ENCODE measurements at regions of chr1 and their contacts with region 1.

Region 1: GRCh38 chr1:116724765-116725375 is 29.4 kb upstream of the CD2 start:
- DNase-seq: no peak
- ATAC-seq: peak; percentile 54
- H3K4me3 Mint-ChIP-seq: no peak overlapping the region
- H3K27ac Mint-ChIP-seq: no peak overlapping the region
- H3K4me1 Mint-ChIP-seq: peaks cover 6% of the 10 kb centered on the region
- H3K27me3 Mint-ChIP-seq: no peaks in the 10 kb centered on the region
- CTCF ChIP-seq: peak; percentile 60

Region 2: GRCh38 chr1:116489231-116489697 is 235.6 kb before region 1 on chr1:
- CTCF ChIA-PET with region 1: no interaction called
- POLR2A ChIA-PET with region 1: no interaction called
- intact Hi-C with region 1: no loop called
- DNase-seq: no peak
- ATAC-seq: no peak
- H3K4me3 Mint-ChIP-seq: no peak overlapping the region
- H3K27ac Mint-ChIP-seq: no peak overlapping the region
- H3K4me1 Mint-ChIP-seq: peaks cover 12% of the 10 kb centered on the region
- H3K27me3 Mint-ChIP-seq: no peaks in the 10 kb centered on the region
- CTCF ChIP-seq: no peak

Region 3: DNA sequence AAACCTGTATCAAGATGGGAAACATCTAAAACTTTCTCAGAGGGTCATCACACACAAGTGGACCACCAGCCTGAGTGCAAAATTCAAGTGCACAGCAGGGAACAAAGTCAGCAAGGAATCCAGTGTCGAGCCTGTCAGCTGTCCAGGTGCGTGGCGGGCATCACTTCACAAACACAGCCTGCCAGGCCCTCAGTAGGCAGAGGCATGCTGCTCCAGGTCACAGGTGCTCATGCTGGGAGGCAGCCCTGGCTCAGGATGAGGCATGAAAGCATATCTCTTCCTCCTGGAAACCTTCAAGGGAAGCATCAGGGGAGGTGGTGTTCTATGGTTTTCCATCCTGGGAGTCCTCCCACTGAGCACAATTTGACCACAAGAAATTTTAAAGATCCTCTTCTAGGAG is 35.6 kb after region 1 on chr1:
- CTCF ChIA-PET with region 1: no interaction called
- POLR2A ChIA-PET with region 1: no interaction called
- intact Hi-C with region 1: no loop called
- DNase-seq: no peak
- ATAC-seq: no peak
- H3K4me3 Mint-ChIP-seq: no peak overlapping the region
- H3K27ac Mint-ChIP-seq: no peak overlapping the region
- H3K4me1 Mint-ChIP-seq: no peaks in the 10 kb centered on the region
- H3K27me3 Mint-ChIP-seq: no peaks in the 10 kb centered on the region
- CTCF ChIP-seq: no peak

Region 4: GRCh38 chr1:116781034-116781433 is 56.2 kb after region 1 on chr1:
- CTCF ChIA-PET with region 1: no interaction called
- POLR2A ChIA-PET with region 1: no interaction called
- intact Hi-C with region 1: no loop called
- DNase-seq: no peak
- ATAC-seq: no peak
- H3K4me3 Mint-ChIP-seq: no peak overlapping the region
- H3K27ac Mint-ChIP-seq: no peak overlapping the region
- H3K4me1 Mint-ChIP-seq: no peaks in the 10 kb centered on the region
- H3K27me3 Mint-ChIP-seq: peaks cover 19% of the 10 kb centered on the region
- CTCF ChIP-seq: no peak

Region 5: DNA sequence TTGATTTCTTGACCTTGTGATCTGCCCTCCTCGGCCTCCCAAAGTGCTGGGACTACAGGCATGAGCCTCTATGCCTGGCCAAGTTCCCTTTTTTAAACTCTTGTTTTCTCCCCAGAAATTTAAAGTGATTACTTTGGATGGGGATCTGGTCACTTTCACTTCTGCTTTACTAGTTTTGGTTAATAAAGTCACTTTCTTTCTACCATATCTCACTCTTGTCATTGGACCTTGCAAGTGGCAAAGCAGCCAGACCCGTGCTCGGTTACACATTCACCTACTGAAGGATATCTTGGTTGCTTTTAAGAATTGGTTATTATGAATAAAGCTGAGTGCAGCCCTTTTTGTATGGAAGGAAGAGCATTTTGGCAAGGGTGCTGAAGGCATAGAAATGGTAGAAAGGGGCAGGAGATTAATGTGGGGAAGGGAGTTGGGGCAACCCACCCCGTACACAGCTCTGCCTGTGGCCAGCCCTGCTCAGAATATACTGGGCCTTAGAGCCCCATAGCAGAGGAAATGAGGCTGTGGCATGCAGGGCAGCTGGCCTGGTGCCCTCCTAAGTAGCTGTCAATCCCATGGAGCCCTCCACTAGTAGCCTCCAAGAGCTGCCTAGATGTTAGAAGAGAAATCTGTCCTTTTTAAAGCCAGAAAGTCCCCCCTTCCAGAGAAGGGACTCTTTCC is 70.1 kb after region 1 on chr1:
- CTCF ChIA-PET with region 1: no interaction called
- POLR2A ChIA-PET with region 1: no interaction called
- intact Hi-C with region 1: no loop called
- DNase-seq: no peak
- ATAC-seq: peak; percentile 88
- H3K4me3 Mint-ChIP-seq: peak overlapping the region; percentile 32
- H3K27ac Mint-ChIP-seq: peak overlapping the region; percentile 69
- H3K4me1 Mint-ChIP-seq: peaks cover 14% of the 10 kb centered on the region
- H3K27me3 Mint-ChIP-seq: peaks cover 4% of the 10 kb centered on the region
- CTCF ChIP-seq: no peak

Region 6: DNA sequence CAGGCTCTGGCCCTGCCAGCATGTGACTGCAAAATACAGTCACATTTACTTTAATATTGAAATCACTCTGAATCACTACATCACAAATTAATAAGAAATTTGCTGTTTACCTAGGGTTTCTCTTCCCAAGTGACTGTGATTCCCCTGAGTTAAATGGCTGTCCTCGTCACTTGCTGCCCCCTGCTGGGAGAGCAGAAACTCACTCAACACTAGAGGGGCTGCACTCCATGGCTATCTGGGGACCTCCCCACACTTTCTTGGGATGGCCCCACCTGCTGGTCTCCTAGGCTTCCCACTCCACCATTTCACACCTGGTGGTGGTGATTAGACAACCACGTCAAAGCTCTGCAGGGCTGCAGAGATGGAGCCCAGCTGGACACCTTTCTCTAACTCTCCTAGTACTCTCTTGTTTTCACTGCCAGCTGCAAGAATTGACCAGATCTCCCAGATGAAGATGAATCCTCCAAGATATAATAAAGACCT is 92.8 kb after region 1 on chr1:
- CTCF ChIA-PET with region 1: no interaction called
- POLR2A ChIA-PET with region 1: no interaction called
- intact Hi-C with region 1: loop called (anchors 2 kb)
- DNase-seq: peak; percentile 33
- ATAC-seq: peak; percentile 66
- H3K4me3 Mint-ChIP-seq: no peak overlapping the region
- H3K27ac Mint-ChIP-seq: no peak overlapping the region
- H3K4me1 Mint-ChIP-seq: peaks cover 9% of the 10 kb centered on the region
- H3K27me3 Mint-ChIP-seq: no peaks in the 10 kb centered on the region
- CTCF ChIP-seq: no peak

Region 7: DNA sequence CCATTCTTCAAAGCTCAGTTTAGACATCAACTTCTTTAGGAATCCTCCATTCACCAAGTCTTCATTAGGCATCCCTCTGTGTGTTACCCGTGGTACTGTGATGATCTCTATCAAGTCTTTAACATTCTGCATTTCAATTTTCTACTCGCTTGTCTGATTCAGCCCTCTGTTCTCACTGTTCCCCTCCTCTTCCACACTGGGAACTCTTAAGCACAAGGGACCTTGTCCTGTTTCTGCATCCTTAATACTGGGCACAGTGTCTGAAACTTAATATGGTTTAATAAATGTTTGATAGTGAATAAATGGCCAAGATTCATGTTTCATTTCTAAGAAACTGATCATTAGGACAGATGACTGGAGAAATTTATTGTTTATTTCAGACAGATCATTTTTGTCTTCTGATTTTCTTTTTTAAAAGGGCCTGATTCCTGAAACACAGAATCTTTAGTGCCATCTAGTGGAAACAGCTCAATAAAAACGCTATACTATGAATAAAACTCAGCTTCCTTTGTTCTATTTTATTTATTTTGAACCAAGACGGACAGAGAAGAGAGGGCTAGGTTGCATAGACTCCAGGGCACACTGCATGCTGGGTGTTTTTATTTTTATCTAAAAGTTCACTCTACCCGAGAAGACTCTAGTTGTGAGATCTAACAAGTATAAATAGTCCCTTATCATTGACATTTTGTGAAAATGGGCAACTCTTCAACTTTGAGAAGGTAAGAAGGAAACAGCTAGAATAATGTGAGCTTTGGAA is 403.6 kb after region 1 on chr1:
- CTCF ChIA-PET with region 1: no interaction called
- POLR2A ChIA-PET with region 1: no interaction called
- intact Hi-C with region 1: loop called (anchors 5 kb)
- DNase-seq: no peak
- ATAC-seq: no peak
- H3K4me3 Mint-ChIP-seq: no peak overlapping the region
- H3K27ac Mint-ChIP-seq: no peak overlapping the region
- H3K4me1 Mint-ChIP-seq: peaks cover 1% of the 10 kb centered on the region
- H3K27me3 Mint-ChIP-seq: peaks cover 4% of the 10 kb centered on the region
- CTCF ChIP-seq: no peak

Measured in activated B cell treated with CpG ODN at 0.5 μM for 24 hours (primary cell).